ENCODE measurements at regions of chr4 and their contacts with region 1.

Region 1: GRCh38 chr4:7328898-7329638 is 105.7 kb downstream of the PSAPL1 start:
- DNase-seq: peak; percentile 61 to 81 (median 70)
- ATAC-seq: peak; percentile 70 to 84 (median 74)
- H3K4me3 ChIP-seq: no peak overlapping the region
- H3K27ac ChIP-seq: no peak overlapping the region
- H3K4me1 ChIP-seq: peaks cover 0 to 26% (median 5%) of the 10 kb centered on the region in 12 donors
- H3K27me3 ChIP-seq: no peaks in the 10 kb centered on the region
- CTCF ChIP-seq: peak in 3 of 12 donors; percentile 14 to 25 (median 20)
- POLR2A ChIP-seq: no peak

Region 2: GRCh38 chr4:7295911-7296660 is 33.0 kb before region 1 on chr4:
- intact Hi-C with region 1: no loop called
- DNase-seq: peak in 4 of 5 donors; percentile 42 to 74 (median 44)
- ATAC-seq: peak in 3 of 4 donors; percentile 58 to 70 (median 59)
- H3K4me3 ChIP-seq: no peak overlapping the region
- H3K27ac ChIP-seq: peak overlapping the region in 1 of 12 donors; percentile 36
- H3K4me1 ChIP-seq: peaks cover 0 to 24% (median 8%) of the 10 kb centered on the region in 12 donors
- H3K27me3 ChIP-seq: peaks cover 0 to 4% (median 0%) of the 10 kb centered on the region in 9 donors
- CTCF ChIP-seq: peak; percentile 26 to 74 (median 66)
- POLR2A ChIP-seq: no peak

Region 3: DNA sequence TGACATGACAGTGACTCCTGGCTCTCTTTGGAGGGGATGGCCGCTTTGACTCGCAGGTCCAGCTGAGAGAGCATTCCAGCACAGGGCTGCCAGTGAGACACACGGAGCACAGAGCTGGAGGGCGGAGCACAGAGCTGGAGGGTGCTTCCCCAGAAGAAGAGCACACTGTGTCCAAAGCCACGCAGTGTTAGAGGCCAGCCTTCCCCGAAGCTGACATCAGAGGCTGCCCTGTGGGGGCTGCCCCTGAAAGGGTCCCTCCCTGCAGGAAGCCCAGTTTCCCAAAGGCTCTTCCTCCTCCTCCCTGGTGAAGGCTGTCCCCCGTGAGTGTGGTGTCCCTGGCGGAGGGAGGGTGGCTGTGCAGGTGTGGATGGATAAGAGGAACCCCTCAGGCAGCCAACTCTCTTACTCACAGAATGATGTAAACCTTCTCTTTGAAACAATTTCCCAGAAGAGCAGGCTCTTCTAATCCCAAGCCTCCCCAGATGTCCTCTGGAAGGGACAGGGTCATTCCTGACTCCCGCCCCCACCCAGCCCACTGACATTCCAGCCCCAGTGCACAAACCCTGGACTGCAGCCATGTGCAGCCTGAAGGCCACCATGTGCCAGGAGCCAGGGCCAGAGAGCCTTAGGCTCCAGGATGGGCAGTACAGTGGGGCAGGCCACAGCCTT is 52.3 kb after region 1 on chr4:
- intact Hi-C with region 1: no loop called
- DNase-seq: peak in 4 of 5 donors; percentile 50 to 70 (median 56)
- ATAC-seq: peak; percentile 59 to 80 (median 70)
- H3K4me3 ChIP-seq: no peak overlapping the region
- H3K27ac ChIP-seq: no peak overlapping the region
- H3K4me1 ChIP-seq: peaks cover 0 to 16% (median 1%) of the 10 kb centered on the region in 12 donors
- H3K27me3 ChIP-seq: peaks cover 0 to 4% (median 0%) of the 10 kb centered on the region in 9 donors
- CTCF ChIP-seq: no peak
- POLR2A ChIP-seq: no peak

Region 4: DNA sequence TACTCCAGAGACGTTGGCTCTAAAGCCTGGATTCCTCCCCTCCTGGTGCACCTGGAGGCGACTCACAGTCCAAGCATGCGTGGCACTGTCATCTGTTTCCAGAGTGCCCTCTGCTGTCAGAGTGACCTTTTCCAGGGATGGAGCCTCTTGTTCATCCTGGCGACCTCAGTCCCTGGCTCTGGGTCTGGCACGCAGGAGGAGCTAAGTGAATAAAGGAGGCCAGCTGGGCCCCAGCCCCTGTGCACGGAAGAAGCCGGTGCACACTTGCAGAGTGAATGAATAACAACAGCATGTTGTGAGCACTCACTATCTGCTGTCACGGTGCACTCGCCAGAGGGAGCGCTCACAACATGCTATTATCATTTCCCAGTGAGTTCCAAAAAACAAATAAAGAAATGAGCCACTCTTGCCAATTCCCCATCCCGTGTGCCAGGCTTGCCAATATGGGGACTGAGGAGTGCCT is 133.5 kb after region 1 on chr4:
- intact Hi-C with region 1: loop called in 1 of 10 experiments (anchors 10 kb)
- DNase-seq: peak in 3 of 5 donors; percentile 31 to 62 (median 45)
- ATAC-seq: peak; percentile 47 to 80 (median 69)
- H3K4me3 ChIP-seq: no peak overlapping the region
- H3K27ac ChIP-seq: peak overlapping the region in 1 of 12 donors; percentile 8
- H3K4me1 ChIP-seq: peaks cover 0 to 11% (median 0%) of the 10 kb centered on the region in 12 donors
- H3K27me3 ChIP-seq: peaks cover 0 to 12% (median 0%) of the 10 kb centered on the region in 9 donors
- CTCF ChIP-seq: peak in 10 of 12 donors; percentile 7 to 58 (median 42)
- POLR2A ChIP-seq: no peak

Region 5: GRCh38 chr4:7725951-7726350 is 396.9 kb after region 1 on chr4:
- intact Hi-C with region 1: no loop called
- DNase-seq: peak in 1 of 5 donors; percentile 49
- ATAC-seq: no peak
- H3K4me3 ChIP-seq: no peak overlapping the region
- H3K27ac ChIP-seq: no peak overlapping the region
- H3K4me1 ChIP-seq: no peaks in the 10 kb centered on the region
- H3K27me3 ChIP-seq: peaks cover 0 to under 1% (median 0%) of the 10 kb centered on the region in 9 donors
- CTCF ChIP-seq: no peak
- POLR2A ChIP-seq: no peak

Measured in heart left ventricle (tissue), 16 donors.